Sciatic nerve (tissue), 2 donors: ENCODE measurements at regions of chr12 and their contacts with region 1.

Region 1: GRCh38 chr12:110100315-110100970 is 23.7 kb upstream of the IFT81 start:
- DNase-seq: peak; percentile 84
- ATAC-seq: peak; percentile 80

Region 2: DNA sequence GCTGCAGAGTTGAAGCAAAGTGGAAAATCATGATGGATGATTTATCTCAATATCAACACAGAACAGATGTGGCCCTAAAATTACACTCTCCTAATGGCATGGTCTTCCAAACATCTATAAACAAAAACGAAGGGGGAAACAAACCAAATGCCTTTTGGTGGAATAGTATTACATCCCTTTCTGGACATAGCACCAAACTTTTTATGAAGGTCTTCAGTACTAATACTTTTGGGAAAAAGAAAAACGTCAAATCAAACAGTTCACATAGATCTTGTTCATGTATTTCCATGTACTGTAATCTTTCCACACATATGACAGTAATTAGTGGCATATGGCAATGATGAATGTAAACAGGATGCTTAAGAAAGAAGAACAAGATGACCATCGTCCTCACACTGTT is 326.0 kb after region 1 on chr12:
- intact Hi-C with region 1: loop called (anchors 10 kb)
- DNase-seq: no peak
- ATAC-seq: no peak

Region 3: GRCh38 chr12:110501752-110502738 is 401.6 kb after region 1 on chr12 and contains the starts of genes RAD9B and VPS29:
- intact Hi-C with region 1: no loop called
- DNase-seq: peak; percentile 99
- ATAC-seq: peak; percentile 99
- total RNA-seq, gene RAD9B: 2.9 TPM
- total RNA-seq, gene VPS29: 102 TPM